SK-N-SH (cell line): ENCODE measurements at regions of chr9 and their contacts with region 1.

Region 1: GRCh38 chr9:34675048-34675714 is 12.7 kb upstream of the CCL27 start:
- DNase-seq: peak; percentile 84
- H3K4me3 ChIP-seq: peak overlapping the region in 1 of 2 experiments; percentile 11; a peak in 1 of 4 replicates
- H3K27ac ChIP-seq: no peak overlapping the region
- H3K4me1 ChIP-seq: no peaks in the 10 kb centered on the region
- H3K27me3 ChIP-seq: no peaks in the 10 kb centered on the region
- CTCF ChIP-seq: peak; percentile 70
- EP300 ChIP-seq: no peak
- RAD21 ChIP-seq: peak; percentile 83

Region 2: GRCh38 chr9:34484682-34485081 is 190.5 kb before region 1 on chr9:
- CTCF ChIA-PET with region 1: no interaction called
- POLR2A ChIA-PET with region 1: no interaction called
- DNase-seq: no peak
- H3K4me3 ChIP-seq: no peak overlapping the region
- H3K27ac ChIP-seq: no peak overlapping the region
- H3K4me1 ChIP-seq: no peaks in the 10 kb centered on the region
- H3K27me3 ChIP-seq: no peaks in the 10 kb centered on the region; the same call in 1 of the 2 replicates
- CTCF ChIP-seq: no peak
- EP300 ChIP-seq: no peak
- RAD21 ChIP-seq: no peak

Region 3: GRCh38 chr9:34611829-34612630 is 63.2 kb before region 1 on chr9 and contains the start of gene RPP25L:
- CTCF ChIA-PET with region 1: no interaction called
- POLR2A ChIA-PET with region 1: no interaction called
- DNase-seq: peak; percentile 93
- H3K4me3 ChIP-seq: peak within 1 kb of the TSS; percentile 66 to 84
- H3K27ac ChIP-seq: peak within 1 kb of the TSS; percentile 73 to 75
- H3K4me1 ChIP-seq: peaks cover 0 to 36% of the 10 kb centered on the region in 2 experiments; a peak in 1 of 4 replicates
- H3K27me3 ChIP-seq: no peaks in the 10 kb centered on the region
- CTCF ChIP-seq: no peak
- EP300 ChIP-seq: no peak
- RAD21 ChIP-seq: no peak
- polyA plus RNA-seq, gene RPP25L: 46.3 and 47.6 TPM in 2 replicates

Region 4: DNA sequence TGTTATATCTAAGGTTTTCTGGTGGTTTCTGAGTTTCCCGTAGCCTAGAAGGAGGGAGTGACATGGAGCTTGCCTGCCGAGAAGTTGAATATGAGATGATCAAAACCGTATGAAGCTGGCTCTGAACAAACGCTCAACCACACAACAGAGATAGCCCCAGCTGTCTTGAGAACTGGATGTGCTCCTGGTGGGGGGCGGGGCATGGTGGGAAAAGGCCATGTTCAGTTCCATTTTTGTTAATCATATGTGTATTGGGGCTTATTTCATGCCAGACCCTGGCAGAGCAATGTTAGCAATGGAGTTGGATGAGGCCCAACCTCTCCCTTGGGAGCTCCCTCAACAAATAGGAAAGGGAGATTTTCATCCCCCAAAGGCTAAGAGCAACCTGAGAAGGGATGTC is 11.1 kb after region 1 on chr9:
- CTCF ChIA-PET with region 1: interaction called, 11 read pairs
- POLR2A ChIA-PET with region 1: no interaction called
- DNase-seq: no peak
- H3K4me3 ChIP-seq: no peak overlapping the region
- H3K27ac ChIP-seq: no peak overlapping the region
- H3K4me1 ChIP-seq: no peaks in the 10 kb centered on the region; a peak in 1 of 4 replicates
- H3K27me3 ChIP-seq: no peaks in the 10 kb centered on the region
- CTCF ChIP-seq: no peak
- EP300 ChIP-seq: no peak
- RAD21 ChIP-seq: no peak

Region 5: DNA sequence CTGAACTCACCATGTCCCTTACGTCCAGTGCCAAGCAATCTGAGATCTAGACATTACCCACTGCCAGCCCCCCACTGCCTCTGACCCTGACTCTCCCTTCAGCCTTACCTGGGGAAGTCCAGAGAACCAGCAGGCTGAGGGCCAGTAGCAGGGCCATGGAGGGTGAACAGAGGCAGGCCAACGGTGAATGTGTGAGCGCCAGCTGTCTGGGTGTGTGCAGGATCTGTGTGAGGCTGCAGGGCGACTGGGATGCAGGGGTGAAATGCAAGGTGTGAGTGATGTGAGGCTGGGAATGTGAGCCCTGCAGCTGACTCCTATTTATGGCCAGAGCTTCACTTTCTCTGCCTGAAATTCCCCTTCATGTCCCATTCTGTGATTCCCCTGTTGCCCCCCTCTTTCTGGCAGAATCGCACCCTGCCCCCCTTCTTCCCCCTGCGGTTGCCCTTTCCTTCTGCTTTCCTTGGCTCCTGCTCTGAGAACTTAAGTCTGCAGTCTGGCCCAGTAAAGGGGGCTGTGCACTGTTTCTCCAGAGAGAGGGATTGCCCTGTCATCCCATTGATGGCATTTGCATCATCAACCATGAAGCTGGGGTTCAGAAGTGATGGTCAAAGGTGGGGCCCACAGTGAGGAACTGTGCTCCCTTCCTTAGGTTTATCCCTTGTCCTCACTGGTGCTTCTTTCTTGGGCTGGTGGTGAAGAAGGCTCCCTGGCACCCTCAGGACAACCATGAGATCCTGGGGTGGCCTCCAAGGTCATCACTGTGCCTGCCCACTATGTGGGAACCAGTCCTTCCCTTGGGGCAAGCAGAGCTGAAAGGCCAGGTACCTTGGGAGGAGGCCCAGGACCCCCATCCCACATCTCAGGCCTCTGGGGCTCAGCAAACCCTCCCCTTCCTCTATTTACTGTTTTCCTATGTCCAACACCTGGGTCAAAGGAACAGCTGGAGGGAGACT is 16.1 kb after region 1 on chr9 and contains the start of gene CCL19:
- CTCF ChIA-PET with region 1: interaction called, 11 read pairs
- POLR2A ChIA-PET with region 1: no interaction called
- DNase-seq: no peak
- H3K4me3 ChIP-seq: no peak within 1 kb of the TSS
- H3K27ac ChIP-seq: no peak within 1 kb of the TSS
- H3K4me1 ChIP-seq: no peaks in the 10 kb centered on the region; a peak in 1 of 4 replicates
- H3K27me3 ChIP-seq: no peaks in the 10 kb centered on the region
- CTCF ChIP-seq: no peak
- EP300 ChIP-seq: no peak
- RAD21 ChIP-seq: no peak
- polyA plus RNA-seq, gene CCL19: not detected in 2 replicates